ENCODE measurements at regions of chr11 and their contacts with region 1.

Region 1: GRCh38 chr11:8826139-8826786 is 84.7 kb upstream of the AKIP1 start:
- DNase-seq: no peak
- ATAC-seq: no peak
- H3K4me3 ChIP-seq: no peak overlapping the region
- H3K4me3 Mint-ChIP-seq: no peak overlapping the region
- H3K27ac ChIP-seq: no peak overlapping the region
- H3K27ac Mint-ChIP-seq: no peak overlapping the region
- H3K4me1 ChIP-seq: no peaks in the 10 kb centered on the region
- H3K4me1 Mint-ChIP-seq: no peaks in the 10 kb centered on the region
- H3K27me3 ChIP-seq: peaks cover 0 to 2% of the 10 kb centered on the region in 2 experiments
- H3K27me3 Mint-ChIP-seq: peaks cover 7% of the 10 kb centered on the region
- CTCF ChIP-seq: no peak

Region 2: DNA sequence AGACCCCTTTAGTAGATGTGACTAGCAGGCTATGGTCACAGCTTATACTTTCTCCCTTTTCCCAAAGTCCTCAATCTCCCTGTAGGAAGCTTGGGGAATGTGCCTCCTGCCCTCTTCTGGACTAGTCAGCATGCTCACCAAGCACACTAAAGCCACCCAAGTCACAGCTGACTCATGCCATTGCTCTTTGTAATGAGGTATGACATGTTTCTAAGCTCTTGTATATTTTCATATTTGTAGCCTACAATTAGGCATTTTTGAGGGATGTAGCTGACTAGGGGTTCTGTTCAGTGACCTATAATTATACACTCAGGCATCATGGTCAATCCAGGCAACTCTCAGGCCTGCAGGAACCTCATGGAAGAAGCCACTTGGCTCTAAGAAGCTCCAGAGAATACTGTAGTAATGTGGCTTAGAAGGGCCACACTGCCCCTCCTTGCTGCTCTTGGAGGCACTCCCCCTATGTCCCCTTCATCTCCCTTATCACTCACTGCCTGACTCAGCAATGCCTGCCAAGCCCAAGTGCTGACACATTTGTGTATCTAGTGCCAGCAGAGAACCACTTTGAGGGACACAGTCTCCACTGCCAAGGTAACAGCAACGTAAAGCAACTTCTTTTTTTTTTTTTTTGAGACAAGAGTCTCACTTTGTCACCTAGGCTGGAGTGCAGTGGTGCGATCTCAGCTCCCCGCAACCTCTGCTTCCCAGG is 57.5 kb before region 1 on chr11:
- CTCF ChIA-PET with region 1: no interaction called
- POLR2A ChIA-PET with region 1: no interaction called
- intact Hi-C with region 1: no loop called
- DNase-seq: no peak
- ATAC-seq: no peak
- H3K4me3 ChIP-seq: no peak overlapping the region
- H3K4me3 Mint-ChIP-seq: no peak overlapping the region
- H3K27ac ChIP-seq: no peak overlapping the region
- H3K27ac Mint-ChIP-seq: no peak overlapping the region
- H3K4me1 ChIP-seq: no peaks in the 10 kb centered on the region
- H3K4me1 Mint-ChIP-seq: no peaks in the 10 kb centered on the region
- H3K27me3 ChIP-seq: no peaks in the 10 kb centered on the region
- H3K27me3 Mint-ChIP-seq: no peaks in the 10 kb centered on the region
- CTCF ChIP-seq: no peak

Region 3: GRCh38 chr11:8866440-8866839 is 40.2 kb after region 1 on chr11:
- CTCF ChIA-PET with region 1: no interaction called
- POLR2A ChIA-PET with region 1: no interaction called
- intact Hi-C with region 1: loop called in 1 of 2 experiments (anchors 1 kb)
- DNase-seq: no peak
- ATAC-seq: no peak
- H3K4me3 ChIP-seq: no peak overlapping the region
- H3K4me3 Mint-ChIP-seq: no peak overlapping the region
- H3K27ac ChIP-seq: no peak overlapping the region
- H3K27ac Mint-ChIP-seq: no peak overlapping the region
- H3K4me1 ChIP-seq: peaks cover 4% of the 10 kb centered on the region
- H3K4me1 Mint-ChIP-seq: peaks cover 5% of the 10 kb centered on the region
- H3K27me3 ChIP-seq: peaks cover 3 to 7% of the 10 kb centered on the region in 2 experiments
- H3K27me3 Mint-ChIP-seq: peaks cover 37% of the 10 kb centered on the region
- CTCF ChIP-seq: no peak

Measured in CD8-positive, alpha-beta T cell (primary cell).